ENCODE measurements at regions of chr21 and their contacts with region 1.

Region 1: DNA sequence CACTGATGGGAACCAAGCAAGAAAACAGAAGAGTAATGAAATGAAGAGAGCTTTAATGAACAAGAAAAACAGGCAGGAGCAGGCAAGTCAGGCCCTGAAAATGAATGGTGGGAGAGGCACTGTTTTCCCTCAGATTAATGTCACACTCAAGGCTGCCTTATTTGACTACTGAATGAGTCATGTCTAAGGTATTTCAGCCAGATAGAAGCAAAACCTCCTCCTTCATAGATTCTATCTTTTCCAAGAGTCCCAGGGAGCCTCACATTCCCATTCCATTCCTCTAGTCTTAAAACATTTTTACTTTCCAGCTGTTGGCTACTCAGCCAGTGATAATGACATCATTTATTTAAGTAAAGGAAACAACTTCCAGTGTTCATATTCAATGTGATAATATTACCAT is 228.4 kb upstream of the NRIP1 start:
- DNase-seq: no peak
- H3K4me3 Mint-ChIP-seq: no peak overlapping the region
- H3K27ac Mint-ChIP-seq: no peak overlapping the region
- H3K4me1 Mint-ChIP-seq: no peaks in the 10 kb centered on the region
- H3K27me3 Mint-ChIP-seq: no peaks in the 10 kb centered on the region

Region 2: GRCh38 chr21:15333951-15334350 is 40.7 kb after region 1 on chr21:
- CTCF ChIA-PET with region 1: no interaction called
- intact Hi-C with region 1: loop called (anchors 5 kb)
- DNase-seq: no peak
- H3K4me3 Mint-ChIP-seq: no peak overlapping the region
- H3K27ac Mint-ChIP-seq: no peak overlapping the region
- H3K4me1 Mint-ChIP-seq: peaks cover 4% of the 10 kb centered on the region
- H3K27me3 Mint-ChIP-seq: peaks cover 2% of the 10 kb centered on the region

Region 3: DNA sequence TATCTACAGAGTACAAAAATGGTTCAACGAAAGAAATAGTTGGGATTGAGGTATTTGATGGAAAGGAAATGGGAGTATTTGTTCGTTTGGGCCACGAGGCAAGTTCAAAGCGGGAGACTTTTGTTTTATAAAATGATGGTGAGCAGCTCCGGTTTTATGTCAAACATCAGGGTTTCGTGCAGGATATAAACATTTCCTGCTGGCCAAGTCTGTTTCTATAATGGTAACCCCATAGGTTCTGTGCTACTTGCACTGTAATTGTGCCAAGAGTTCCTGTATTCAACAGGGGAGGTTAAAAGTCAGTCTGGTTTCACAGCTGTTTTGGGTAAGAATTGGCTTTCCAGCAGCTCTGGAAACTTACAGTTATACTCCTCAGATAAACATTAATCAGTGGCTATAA is 61.8 kb after region 1 on chr21:
- CTCF ChIA-PET with region 1: no interaction called
- intact Hi-C with region 1: loop called (anchors 10 kb)
- DNase-seq: no peak
- H3K4me3 Mint-ChIP-seq: no peak overlapping the region
- H3K27ac Mint-ChIP-seq: no peak overlapping the region
- H3K4me1 Mint-ChIP-seq: peaks cover 7% of the 10 kb centered on the region
- H3K27me3 Mint-ChIP-seq: no peaks in the 10 kb centered on the region

Measured in activated naive CD4-positive, alpha-beta T cell treated with anti-CD3 and anti-CD28 coated beads for 36 hours (primary cell).